ENCODE measurements at regions of chr12 and their contacts with region 1.

Region 1: DNA sequence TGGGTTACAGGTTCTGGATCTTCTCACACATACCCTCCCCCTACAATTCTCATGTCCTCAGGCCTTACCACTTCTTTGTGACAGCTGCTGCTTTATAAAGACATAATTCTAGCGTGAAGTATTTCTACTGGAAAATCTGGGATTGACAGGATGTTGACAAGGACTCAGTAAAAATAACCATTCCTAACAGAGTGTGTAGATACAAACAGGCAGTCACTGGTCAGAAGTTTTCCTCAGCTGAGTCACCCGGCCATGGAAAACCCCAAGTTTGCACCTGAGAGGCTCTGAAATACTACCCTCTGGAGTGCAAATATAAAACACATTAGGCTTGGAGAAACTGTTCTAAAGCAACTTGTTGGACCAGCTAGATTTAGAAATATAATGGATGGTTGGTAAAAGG is 54.4 kb downstream of the SPPL3 start:
- DNase-seq: no peak
- H3K4me3 ChIP-seq: no peak overlapping the region
- H3K27ac ChIP-seq: peak overlapping the region; percentile 41
- H3K4me1 ChIP-seq: peaks cover 69% of the 10 kb centered on the region
- CTCF ChIP-seq: no peak

Region 2: GRCh38 chr12:120767485-120767944 is 82.2 kb before region 1 on chr12:
- CTCF ChIA-PET with region 1: no interaction called
- POLR2A ChIA-PET with region 1: interaction called, 5 read pairs
- intact Hi-C with region 1: loop called (anchors 2 kb)
- DNase-seq: peak; percentile 89
- H3K4me3 ChIP-seq: peak overlapping the region; percentile 51
- H3K27ac ChIP-seq: peak overlapping the region; percentile 90
- H3K4me1 ChIP-seq: peaks cover 55% of the 10 kb centered on the region
- CTCF ChIP-seq: peak; percentile 69

Region 3: GRCh38 chr12:120797677-120798642 is 51.8 kb before region 1 on chr12:
- CTCF ChIA-PET with region 1: no interaction called
- POLR2A ChIA-PET with region 1: interaction called, 10 read pairs
- intact Hi-C with region 1: loop called (anchors 2 kb)
- DNase-seq: peak; percentile 46
- H3K4me3 ChIP-seq: peak overlapping the region; percentile 49
- H3K27ac ChIP-seq: peak overlapping the region; percentile 60
- H3K4me1 ChIP-seq: peaks cover 52% of the 10 kb centered on the region
- CTCF ChIP-seq: peak; percentile 54

Region 4: DNA sequence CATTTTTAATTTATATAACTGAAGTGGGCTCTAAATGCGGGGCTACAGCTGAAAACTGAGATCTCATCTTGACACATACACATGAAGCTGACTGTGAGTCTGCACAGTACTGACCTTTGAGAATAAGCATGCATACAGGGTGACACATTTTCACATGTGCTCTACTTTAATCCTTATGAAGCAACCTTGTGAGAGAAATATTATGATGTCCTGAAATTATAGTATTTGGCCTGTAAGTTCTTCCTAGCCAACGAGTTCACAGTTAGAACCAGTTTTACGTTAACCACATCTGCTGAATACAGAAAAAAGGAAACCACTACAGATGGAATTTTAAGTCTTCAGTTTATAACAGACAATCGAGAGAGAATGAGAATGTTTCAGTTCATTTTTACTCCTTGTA is 15.9 kb before region 1 on chr12:
- CTCF ChIA-PET with region 1: no interaction called
- POLR2A ChIA-PET with region 1: interaction called, 36 read pairs
- intact Hi-C with region 1: no loop called
- DNase-seq: no peak
- H3K4me3 ChIP-seq: no peak overlapping the region
- H3K27ac ChIP-seq: no peak overlapping the region
- H3K4me1 ChIP-seq: peaks cover 32% of the 10 kb centered on the region
- CTCF ChIP-seq: no peak

Measured in OCI-LY7 (cell line).